CD8-positive, alpha-beta T cell (primary cell): ENCODE measurements at regions of chr11 and their contacts with region 1.

Region 1: GRCh38 chr11:35040221-35040942 is 98.6 kb upstream of the CD44 start:
- DNase-seq: peak in 8 of 9 experiments; percentile 16 to 87 (median 55)
- ATAC-seq: peak; percentile 77
- H3K4me3 ChIP-seq: peak overlapping the region in 1 of 2 experiments; percentile 46
- H3K4me3 Mint-ChIP-seq: peak overlapping the region; percentile 79
- H3K27ac ChIP-seq: peak overlapping the region; percentile 36 to 83
- H3K27ac Mint-ChIP-seq: peak overlapping the region; percentile 97
- H3K4me1 ChIP-seq: peaks cover 25% of the 10 kb centered on the region
- H3K4me1 Mint-ChIP-seq: peaks cover 35% of the 10 kb centered on the region
- H3K27me3 ChIP-seq: no peaks in the 10 kb centered on the region
- H3K27me3 Mint-ChIP-seq: no peaks in the 10 kb centered on the region
- CTCF ChIP-seq: no peak

Region 2: GRCh38 chr11:35003658-35004057 is 36.7 kb before region 1 on chr11:
- CTCF ChIA-PET with region 1: interaction called, 3 read pairs
- POLR2A ChIA-PET with region 1: no interaction called
- intact Hi-C with region 1: loop called (anchors 1 to 5 kb)
- DNase-seq: no peak
- ATAC-seq: no peak
- H3K4me3 ChIP-seq: no peak overlapping the region
- H3K4me3 Mint-ChIP-seq: no peak overlapping the region
- H3K27ac ChIP-seq: no peak overlapping the region
- H3K27ac Mint-ChIP-seq: no peak overlapping the region
- H3K4me1 ChIP-seq: peaks cover 8% of the 10 kb centered on the region
- H3K4me1 Mint-ChIP-seq: peaks cover 26% of the 10 kb centered on the region
- H3K27me3 ChIP-seq: no peaks in the 10 kb centered on the region
- H3K27me3 Mint-ChIP-seq: no peaks in the 10 kb centered on the region
- CTCF ChIP-seq: no peak

Region 3: DNA sequence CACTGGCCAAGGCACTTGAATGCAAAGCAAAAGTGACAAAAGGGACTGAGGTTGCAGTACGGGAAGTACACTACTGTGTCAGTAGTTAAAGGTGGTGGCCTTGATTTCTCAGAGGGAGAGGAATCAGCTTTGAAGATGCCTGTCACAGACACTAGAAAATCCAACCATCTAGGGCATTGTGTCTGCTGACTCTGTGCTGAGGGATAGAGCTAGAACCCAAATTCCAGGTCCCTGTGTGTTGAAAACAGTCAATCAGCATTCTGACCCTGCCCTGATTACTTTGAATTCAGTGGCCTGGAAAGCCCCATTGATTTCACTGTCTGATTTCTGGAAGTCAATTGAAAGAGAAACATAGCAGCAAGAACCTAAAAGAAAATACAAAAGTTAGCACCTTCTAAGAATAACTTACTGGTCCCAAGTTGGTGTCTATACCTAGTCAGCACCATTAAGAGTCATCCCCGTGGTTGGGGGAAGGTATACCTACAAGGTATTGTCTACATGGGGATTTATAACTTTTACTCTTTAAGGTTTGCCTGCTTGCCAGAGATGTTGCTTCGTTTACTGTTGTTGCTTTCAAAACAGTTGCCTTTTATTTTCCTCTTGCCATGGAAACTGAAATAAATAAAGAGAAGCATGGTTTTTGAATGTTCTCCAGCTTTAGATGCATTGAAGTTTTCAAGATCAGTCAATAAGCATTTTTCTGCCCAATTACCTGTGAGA is 26.7 kb before region 1 on chr11:
- CTCF ChIA-PET with region 1: interaction called, 3 read pairs
- POLR2A ChIA-PET with region 1: interaction called, 3 read pairs
- intact Hi-C with region 1: loop called (anchors 2 to 5 kb)
- DNase-seq: peak in 5 of 9 experiments; percentile 5 to 76 (median 43)
- ATAC-seq: peak; percentile 74
- H3K4me3 ChIP-seq: no peak overlapping the region
- H3K4me3 Mint-ChIP-seq: peak overlapping the region; percentile 24
- H3K27ac ChIP-seq: peak overlapping the region in 1 of 2 experiments; percentile 25
- H3K27ac Mint-ChIP-seq: peak overlapping the region; percentile 87
- H3K4me1 ChIP-seq: peaks cover 21% of the 10 kb centered on the region
- H3K4me1 Mint-ChIP-seq: peaks cover 24% of the 10 kb centered on the region
- H3K27me3 ChIP-seq: no peaks in the 10 kb centered on the region
- H3K27me3 Mint-ChIP-seq: no peaks in the 10 kb centered on the region
- CTCF ChIP-seq: no peak